ENCODE measurements at regions of chr7 and their contacts with region 1.

Region 1: DNA sequence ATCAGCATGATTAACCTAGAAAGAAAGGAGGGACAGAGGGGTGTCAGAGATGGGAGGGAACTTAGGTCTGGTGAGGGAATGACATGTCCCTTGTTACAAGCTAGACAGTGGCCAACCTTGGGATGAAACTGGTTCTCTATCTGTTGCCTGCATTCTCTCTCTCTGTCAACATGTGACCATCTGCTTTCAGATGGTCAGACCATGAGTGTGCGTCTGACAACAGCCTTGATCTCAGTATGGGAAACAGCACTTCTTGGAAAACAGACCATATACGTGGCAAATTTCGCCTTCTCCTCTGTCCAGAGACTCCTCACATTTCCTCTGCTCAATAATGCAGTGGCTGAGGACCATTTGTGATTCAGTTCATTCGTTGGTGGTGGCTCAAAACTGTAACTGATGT is 845.9 kb downstream of the TYW1 start:
- DNase-seq: no peak
- H3K4me3 ChIP-seq: no peak overlapping the region
- H3K27ac ChIP-seq: no peak overlapping the region
- H3K4me1 ChIP-seq: no peaks in the 10 kb centered on the region
- CTCF ChIP-seq: no peak

Region 2: DNA sequence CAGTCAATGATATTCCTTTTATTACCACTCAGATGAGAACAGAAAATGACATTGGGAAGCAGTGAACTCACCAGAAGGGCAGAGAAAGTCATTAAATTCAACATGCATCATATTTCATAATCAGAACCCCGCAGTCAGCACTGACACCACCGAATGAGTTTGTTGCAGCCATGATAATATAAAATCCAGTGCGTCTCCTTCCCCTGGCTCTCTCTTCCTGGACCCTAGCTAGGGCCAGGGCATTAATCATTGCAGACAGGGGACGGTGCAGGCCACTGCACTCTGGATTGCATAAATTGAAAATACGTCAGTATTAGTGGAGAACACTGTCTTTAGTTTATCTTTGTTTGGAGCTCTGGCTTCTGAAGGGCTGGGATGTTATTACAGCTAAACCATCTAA is 85.6 kb after region 1 on chr7:
- CTCF ChIA-PET with region 1: no interaction called
- POLR2A ChIA-PET with region 1: interaction called, 10 read pairs
- intact Hi-C with region 1: no loop called
- DNase-seq: no peak
- H3K4me3 ChIP-seq: no peak overlapping the region
- H3K27ac ChIP-seq: no peak overlapping the region
- H3K4me1 ChIP-seq: no peaks in the 10 kb centered on the region
- CTCF ChIP-seq: no peak

Measured in OCI-LY7 (cell line).